Activated naive CD4-positive, alpha-beta T cell treated with anti-CD3 and anti-CD28 coated beads for 36 hours (primary cell): ENCODE measurements at regions of chr12 and their contacts with region 1.

Region 1: GRCh38 chr12:133037207-133038005 is at the start of gene ZNF84:
- DNase-seq: peak; percentile 97
- H3K4me3 Mint-ChIP-seq: peak within 1 kb of the TSS; percentile 97
- H3K27ac Mint-ChIP-seq: peak within 1 kb of the TSS; percentile 97
- H3K4me1 Mint-ChIP-seq: peaks cover 10% of the 10 kb centered on the region
- H3K27me3 Mint-ChIP-seq: no peaks in the 10 kb centered on the region
- total RNA-seq, gene ZNF84: 11.0 to 12.9 TPM

Region 2: GRCh38 chr12:132771126-132771838 is 266.1 kb before region 1 on chr12:
- CTCF ChIA-PET with region 1: no interaction called
- intact Hi-C with region 1: loop called (anchors 1 kb)
- DNase-seq: peak; percentile 75
- H3K4me3 Mint-ChIP-seq: peak overlapping the region; percentile 30
- H3K27ac Mint-ChIP-seq: peak overlapping the region; percentile 80
- H3K4me1 Mint-ChIP-seq: peaks cover 57% of the 10 kb centered on the region
- H3K27me3 Mint-ChIP-seq: no peaks in the 10 kb centered on the region

Region 3: GRCh38 chr12:132956011-132956788 is 81.2 kb before region 1 on chr12 and contains the start of gene ZNF605:
- CTCF ChIA-PET with region 1: no interaction called
- intact Hi-C with region 1: loop called (anchors 1 kb)
- DNase-seq: peak; percentile 92
- H3K4me3 Mint-ChIP-seq: peak within 1 kb of the TSS; percentile 89
- H3K27ac Mint-ChIP-seq: peak within 1 kb of the TSS; percentile 87
- H3K4me1 Mint-ChIP-seq: peaks cover 20% of the 10 kb centered on the region
- H3K27me3 Mint-ChIP-seq: no peaks in the 10 kb centered on the region
- total RNA-seq, gene ZNF605: 4.3 to 5.3 TPM

Region 4: GRCh38 chr12:132986001-132986912 is 51.1 kb before region 1 on chr12 and contains the start of gene ZNF26:
- CTCF ChIA-PET with region 1: no interaction called
- intact Hi-C with region 1: loop called (anchors 1 kb)
- DNase-seq: peak; percentile 92
- H3K4me3 Mint-ChIP-seq: peak within 1 kb of the TSS; percentile 91
- H3K27ac Mint-ChIP-seq: peak within 1 kb of the TSS; percentile 90
- H3K4me1 Mint-ChIP-seq: peaks cover 24% of the 10 kb centered on the region
- H3K27me3 Mint-ChIP-seq: peaks cover 4% of the 10 kb centered on the region
- total RNA-seq, gene ZNF26: 8.4 to 12.2 TPM

Region 5: DNA sequence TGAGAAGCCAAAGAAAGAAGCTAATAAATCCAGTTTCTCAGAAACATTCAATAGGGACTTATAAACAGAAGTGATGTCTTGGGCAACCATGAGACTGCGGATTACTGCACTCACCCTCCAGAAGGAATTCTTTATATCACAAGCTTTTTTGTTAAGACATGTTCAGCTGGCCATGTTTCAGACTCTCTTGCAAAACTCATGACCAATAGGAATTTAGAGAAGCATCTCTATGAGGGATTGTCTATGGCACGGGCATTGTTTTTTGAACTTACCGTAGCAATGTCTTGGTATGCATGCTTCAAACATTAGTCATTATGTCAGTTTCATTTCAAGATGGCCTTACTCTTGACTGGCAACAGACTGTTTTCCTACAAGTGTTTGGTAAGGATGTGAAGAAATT is 128.4 kb after region 1 on chr12:
- CTCF ChIA-PET with region 1: no interaction called
- intact Hi-C with region 1: no loop called
- DNase-seq: no peak
- H3K4me3 Mint-ChIP-seq: no peak overlapping the region
- H3K27ac Mint-ChIP-seq: no peak overlapping the region
- H3K4me1 Mint-ChIP-seq: no peaks in the 10 kb centered on the region
- H3K27me3 Mint-ChIP-seq: no peaks in the 10 kb centered on the region

Region 6: DNA sequence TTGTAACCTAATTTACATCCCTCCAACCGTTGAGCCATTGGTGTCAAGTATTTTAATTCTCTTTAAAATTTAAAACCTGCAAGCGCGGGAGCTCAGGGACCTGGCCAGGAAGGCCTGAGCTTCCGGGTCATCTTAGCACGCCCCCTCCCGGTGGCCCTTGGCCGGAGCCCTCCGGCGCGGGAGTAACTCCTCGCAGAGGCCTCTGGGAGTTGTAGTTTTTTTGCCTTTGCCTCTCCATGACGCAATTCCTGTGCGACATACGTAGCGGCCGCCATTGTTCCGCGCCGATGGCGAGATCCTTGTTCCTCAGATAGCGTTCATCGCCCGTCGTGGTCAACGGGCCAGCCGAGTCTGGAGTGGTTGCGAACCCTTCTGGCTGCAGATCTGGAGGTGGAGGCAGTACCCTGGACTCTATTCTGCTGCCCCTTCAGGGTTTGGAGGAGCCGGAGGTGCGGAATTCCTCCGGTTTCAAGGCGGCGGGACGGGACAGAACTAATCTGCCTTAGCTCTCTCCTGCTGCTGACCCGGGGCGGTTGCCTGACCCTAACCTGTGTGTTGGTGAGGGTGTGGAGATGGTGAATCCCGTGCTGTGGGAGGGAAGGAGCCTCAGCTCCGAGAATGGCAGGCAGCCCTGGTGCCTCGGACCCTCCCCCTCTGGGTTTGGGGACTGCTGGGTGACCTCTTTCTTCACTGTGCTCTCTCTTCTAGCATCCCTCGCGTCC is 144.0 kb after region 1 on chr12 and contains the start of gene ZNF268:
- CTCF ChIA-PET with region 1: interaction called, 3 read pairs
- intact Hi-C with region 1: loop called (anchors 1 kb)
- DNase-seq: peak; percentile 96
- H3K4me3 Mint-ChIP-seq: peak within 1 kb of the TSS; percentile 94
- H3K27ac Mint-ChIP-seq: peak within 1 kb of the TSS; percentile 79
- H3K4me1 Mint-ChIP-seq: peaks cover 19% of the 10 kb centered on the region
- H3K27me3 Mint-ChIP-seq: no peaks in the 10 kb centered on the region
- total RNA-seq, gene ZNF268: 8.4 to 9.1 TPM